ENCODE measurements at regions of chr2 and their contacts with region 1.

Region 1: GRCh38 chr2:3575534-3576262 is 638 bp downstream of the RPS7 start:
- DNase-seq: no peak
- H3K4me3 Mint-ChIP-seq: peak overlapping the region; percentile 85
- H3K27ac Mint-ChIP-seq: peak overlapping the region; percentile 91
- H3K4me1 Mint-ChIP-seq: peaks cover 39% of the 10 kb centered on the region
- H3K27me3 Mint-ChIP-seq: no peaks in the 10 kb centered on the region
- CTCF ChIP-seq: no peak

Region 2: GRCh38 chr2:3536682-3537632 is 38.7 kb before region 1 on chr2:
- CTCF ChIA-PET with region 1: no interaction called
- POLR2A ChIA-PET with region 1: no interaction called
- intact Hi-C with region 1: loop called (anchors 1 kb)
- DNase-seq: peak; percentile 15
- H3K4me3 Mint-ChIP-seq: peak overlapping the region; percentile 66
- H3K27ac Mint-ChIP-seq: peak overlapping the region; percentile 95
- H3K4me1 Mint-ChIP-seq: peaks cover 15% of the 10 kb centered on the region
- H3K27me3 Mint-ChIP-seq: no peaks in the 10 kb centered on the region
- CTCF ChIP-seq: no peak

Region 3: GRCh38 chr2:3620834-3621233 is 45.1 kb after region 1 on chr2:
- CTCF ChIA-PET with region 1: no interaction called
- POLR2A ChIA-PET with region 1: interaction called, 18 read pairs
- intact Hi-C with region 1: no loop called
- DNase-seq: peak; percentile 42
- H3K4me3 Mint-ChIP-seq: peak overlapping the region; percentile 44
- H3K27ac Mint-ChIP-seq: peak overlapping the region; percentile 95
- H3K4me1 Mint-ChIP-seq: peaks cover 16% of the 10 kb centered on the region
- H3K27me3 Mint-ChIP-seq: no peaks in the 10 kb centered on the region
- CTCF ChIP-seq: no peak

Region 4: GRCh38 chr2:3633089-3633981 is 57.6 kb after region 1 on chr2:
- CTCF ChIA-PET with region 1: interaction called, 3 read pairs
- POLR2A ChIA-PET with region 1: interaction called, 14 read pairs
- intact Hi-C with region 1: no loop called
- DNase-seq: peak; percentile 92
- H3K4me3 Mint-ChIP-seq: no peak overlapping the region
- H3K27ac Mint-ChIP-seq: peak overlapping the region; percentile 39
- H3K4me1 Mint-ChIP-seq: peaks cover 14% of the 10 kb centered on the region
- H3K27me3 Mint-ChIP-seq: no peaks in the 10 kb centered on the region
- CTCF ChIP-seq: no peak

Region 5: DNA sequence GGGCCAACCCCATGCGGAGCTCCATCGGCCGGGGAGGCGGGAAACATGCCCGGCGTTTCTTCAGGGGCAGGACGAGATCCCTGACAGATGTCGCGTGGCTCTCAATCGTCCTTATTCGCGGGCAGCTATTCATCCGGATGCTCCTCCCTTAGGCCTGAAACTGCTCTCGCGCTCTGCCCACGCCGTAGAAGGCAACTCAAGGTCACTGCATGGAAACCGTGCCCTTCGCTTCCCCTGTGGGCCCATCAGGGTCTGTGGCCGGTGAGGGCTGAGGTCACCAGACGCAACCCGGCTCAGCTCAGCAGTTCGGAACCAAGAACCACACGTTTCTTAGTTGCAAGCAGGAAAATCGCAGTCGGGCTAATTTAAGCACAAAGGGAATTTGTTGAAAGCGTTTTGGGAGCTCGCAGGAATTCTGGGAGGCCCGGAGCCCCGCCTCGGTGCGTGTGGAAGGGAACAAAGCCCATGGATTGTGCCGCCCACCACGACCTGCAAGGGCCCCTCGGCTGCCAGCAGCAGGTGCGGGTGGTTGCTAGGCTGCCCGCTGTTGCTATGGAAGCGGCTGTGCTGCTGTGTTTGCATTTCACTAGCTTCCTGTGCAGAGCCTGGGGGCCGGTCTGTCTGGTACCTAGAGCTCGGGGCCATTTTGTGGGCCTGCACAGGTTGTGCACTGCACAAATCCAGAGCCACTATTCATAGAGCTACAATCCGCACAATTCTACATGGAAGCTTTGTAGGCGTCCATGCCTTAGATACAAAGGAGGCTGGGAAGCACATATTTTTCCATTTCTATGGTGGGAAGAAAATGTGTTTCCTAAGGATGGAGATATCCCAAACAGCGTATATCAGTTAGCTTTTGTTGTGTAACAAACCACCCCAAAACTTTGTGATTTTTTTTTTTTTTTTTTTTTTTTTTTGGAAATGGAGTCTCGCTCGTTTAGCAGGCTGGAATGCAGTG is 76.3 kb after region 1 on chr2:
- CTCF ChIA-PET with region 1: interaction called, 22 read pairs
- POLR2A ChIA-PET with region 1: interaction called, 3 read pairs
- intact Hi-C with region 1: loop called (anchors 2 kb)
- DNase-seq: no peak
- H3K4me3 Mint-ChIP-seq: no peak overlapping the region
- H3K27ac Mint-ChIP-seq: no peak overlapping the region
- H3K4me1 Mint-ChIP-seq: peaks cover 7% of the 10 kb centered on the region
- H3K27me3 Mint-ChIP-seq: no peaks in the 10 kb centered on the region
- CTCF ChIP-seq: no peak